AG04449 (cell line): ENCODE measurements at regions of chr17 and their contacts with region 1.

Region 1: GRCh38 chr17:73255671-73256181 is 6.0 kb downstream of the CPSF4L start:
- DNase-seq: no peak
- H3K4me3 ChIP-seq: no peak overlapping the region
- CTCF ChIP-seq: peak; percentile 93

Region 2: GRCh38 chr17:73240561-73240960 is 15.2 kb before region 1 on chr17:
- CTCF ChIA-PET with region 1: interaction called, 55 read pairs
- POLR2A ChIA-PET with region 1: no interaction called
- DNase-seq: no peak
- H3K4me3 ChIP-seq: no peak overlapping the region
- CTCF ChIP-seq: no peak

Region 3: GRCh38 chr17:73297934-73298861 is 42.5 kb after region 1 on chr17:
- CTCF ChIA-PET with region 1: interaction called, 11 read pairs
- POLR2A ChIA-PET with region 1: no interaction called
- DNase-seq: no peak
- H3K4me3 ChIP-seq: no peak overlapping the region
- CTCF ChIP-seq: no peak

Region 4: GRCh38 chr17:73349138-73349537 is 93.4 kb after region 1 on chr17:
- CTCF ChIA-PET with region 1: interaction called, 20 read pairs
- POLR2A ChIA-PET with region 1: no interaction called
- DNase-seq: no peak
- H3K4me3 ChIP-seq: no peak overlapping the region
- CTCF ChIP-seq: no peak

Region 5: GRCh38 chr17:73420895-73421294 is 165.2 kb after region 1 on chr17:
- CTCF ChIA-PET with region 1: interaction called, 20 read pairs
- POLR2A ChIA-PET with region 1: no interaction called
- DNase-seq: no peak
- H3K4me3 ChIP-seq: no peak overlapping the region
- CTCF ChIP-seq: peak; percentile 40